ENCODE measurements at regions of chr1 and their contacts with region 1.

Region 1: DNA sequence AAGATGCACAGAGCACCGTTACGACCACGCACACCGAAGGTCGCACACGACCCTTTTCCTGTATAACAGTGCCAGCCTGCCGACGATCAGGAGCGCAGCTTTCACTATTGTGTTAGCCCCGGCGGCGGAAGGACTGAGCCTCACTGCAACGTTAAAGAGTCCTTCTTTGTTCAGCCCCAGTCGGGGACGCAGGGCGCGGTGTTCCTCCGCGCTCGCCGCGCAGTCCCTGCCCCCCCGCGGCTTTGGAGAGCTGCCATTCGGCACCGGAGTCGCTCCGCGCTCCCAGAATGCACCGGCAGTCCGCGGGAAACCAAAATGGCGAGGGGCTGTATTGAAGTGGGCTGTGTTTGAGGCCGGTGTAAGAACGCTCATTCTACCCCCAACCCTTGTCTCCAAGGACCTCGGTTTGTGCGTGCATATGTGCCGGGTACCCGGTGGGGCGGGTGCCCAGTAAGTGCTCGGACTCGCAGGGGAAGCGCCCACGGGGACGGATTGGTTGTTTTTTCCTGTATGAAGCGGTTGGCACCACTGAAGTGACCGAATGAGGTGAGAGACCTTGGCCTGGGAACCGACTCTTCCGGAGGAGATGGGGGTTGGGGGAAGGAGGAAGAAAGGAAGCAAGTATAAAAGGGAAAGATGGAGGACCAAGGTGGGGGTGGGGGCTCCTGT is at the start of gene MTF2:
- DNase-seq: peak; percentile 96
- H3K4me3 Mint-ChIP-seq: peak within 1 kb of the TSS; percentile 94
- H3K27ac Mint-ChIP-seq: peak within 1 kb of the TSS; percentile 94
- H3K4me1 Mint-ChIP-seq: peaks cover 29% of the 10 kb centered on the region
- H3K27me3 Mint-ChIP-seq: no peaks in the 10 kb centered on the region
- total RNA-seq, gene MTF2: 51.0 to 56.6 TPM

Region 2: DNA sequence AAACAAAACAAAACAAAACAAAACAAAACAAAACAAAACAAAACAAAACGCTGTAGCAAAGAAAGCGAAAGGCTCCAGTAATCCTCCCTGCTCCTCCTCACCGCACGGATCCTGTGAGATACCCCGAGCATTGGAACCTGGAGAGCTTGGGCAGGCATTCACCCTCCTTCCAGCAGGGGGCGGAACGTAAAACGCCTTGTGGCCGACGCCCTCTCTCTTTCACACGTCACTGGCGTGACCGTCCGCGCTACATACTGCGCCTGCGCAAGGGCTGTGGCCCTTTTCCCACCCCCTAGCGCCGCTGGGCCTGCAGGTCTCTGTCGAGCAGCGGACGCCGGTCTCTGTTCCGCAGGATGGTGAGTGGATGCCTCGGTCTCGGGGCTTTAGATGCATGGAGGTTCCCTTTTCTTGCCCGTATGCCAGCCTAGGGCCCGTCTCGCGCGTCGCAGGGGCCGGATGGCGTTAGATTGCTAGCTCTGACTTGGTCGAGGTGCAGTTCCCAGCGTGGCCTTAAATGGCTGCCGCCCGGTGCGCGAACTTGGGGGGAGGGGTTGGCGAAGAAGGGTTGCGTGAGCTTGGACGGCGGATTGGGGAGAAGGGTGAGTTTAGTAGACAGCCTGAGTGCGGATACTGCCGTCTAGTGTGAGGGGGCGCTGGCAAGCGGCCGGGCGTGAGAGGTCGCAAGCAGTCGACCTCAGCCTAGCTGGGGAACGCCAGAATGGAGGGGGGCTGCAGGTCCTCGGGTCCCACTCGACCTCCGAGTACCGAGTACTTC is 247.2 kb before region 1 on chr1 and contains the start of gene RPL5:
- CTCF ChIA-PET with region 1: interaction called, 5 read pairs
- intact Hi-C with region 1: loop called (anchors 1 kb)
- DNase-seq: peak; percentile 98
- H3K4me3 Mint-ChIP-seq: peak within 1 kb of the TSS; percentile 98
- H3K27ac Mint-ChIP-seq: peak within 1 kb of the TSS; percentile 99
- H3K4me1 Mint-ChIP-seq: peaks cover 38% of the 10 kb centered on the region
- H3K27me3 Mint-ChIP-seq: no peaks in the 10 kb centered on the region
- total RNA-seq, gene RPL5: 1,793 to 1,819 TPM

Region 3: GRCh38 chr1:93021539-93022134 is 57.5 kb before region 1 on chr1:
- CTCF ChIA-PET with region 1: interaction called, 6 read pairs
- intact Hi-C with region 1: loop called (anchors 5 kb)
- DNase-seq: no peak
- H3K4me3 Mint-ChIP-seq: no peak overlapping the region
- H3K27ac Mint-ChIP-seq: no peak overlapping the region
- H3K4me1 Mint-ChIP-seq: no peaks in the 10 kb centered on the region
- H3K27me3 Mint-ChIP-seq: peaks cover 1% of the 10 kb centered on the region

Region 4: DNA sequence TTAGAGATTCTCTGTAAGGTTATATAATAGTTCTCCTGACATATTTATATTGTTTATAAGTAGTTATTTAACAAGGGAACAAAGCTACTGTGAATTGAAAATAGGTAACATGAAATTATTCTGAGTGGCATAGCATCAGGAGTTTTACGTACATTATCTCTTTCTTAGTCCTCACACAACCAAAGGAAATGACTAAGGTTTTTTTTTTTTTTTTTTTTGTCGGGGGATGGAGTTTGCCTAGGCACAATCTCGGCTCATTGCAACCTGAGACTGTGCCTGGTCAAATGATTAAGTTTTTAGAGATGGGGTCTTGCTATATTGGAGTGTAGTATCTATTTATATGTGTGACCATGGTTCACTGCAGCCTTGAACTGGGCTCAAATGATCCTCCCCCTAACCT is 76.2 kb after region 1 on chr1:
- CTCF ChIA-PET with region 1: interaction called, 3 read pairs
- intact Hi-C with region 1: loop called (anchors 1 kb)
- DNase-seq: no peak
- H3K4me3 Mint-ChIP-seq: no peak overlapping the region
- H3K27ac Mint-ChIP-seq: peak overlapping the region; percentile 73
- H3K4me1 Mint-ChIP-seq: peaks cover 23% of the 10 kb centered on the region
- H3K27me3 Mint-ChIP-seq: no peaks in the 10 kb centered on the region

Region 5: DNA sequence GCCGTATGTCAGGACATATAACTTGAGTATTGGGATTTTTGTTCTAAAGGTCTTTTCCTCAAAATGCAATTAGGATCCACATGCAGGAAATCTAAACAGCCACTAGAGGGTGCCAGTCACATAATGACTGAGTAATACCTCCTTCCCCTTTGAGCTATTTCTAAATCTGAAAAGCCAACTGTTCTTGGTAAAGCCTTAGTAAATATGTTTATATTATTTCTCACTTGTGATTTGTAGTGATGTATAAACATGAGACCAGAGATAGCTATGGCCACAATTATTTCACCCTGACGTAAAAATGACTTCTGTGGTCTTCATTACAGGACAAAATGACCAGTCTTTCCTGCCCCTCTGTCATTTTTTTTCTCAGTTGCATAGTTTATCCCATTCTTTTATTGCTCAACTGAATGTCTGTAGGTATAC is 225.6 kb after region 1 on chr1:
- CTCF ChIA-PET with region 1: interaction called, 15 read pairs
- intact Hi-C with region 1: loop called (anchors 1 kb)
- DNase-seq: peak; percentile 67
- H3K4me3 Mint-ChIP-seq: no peak overlapping the region
- H3K27ac Mint-ChIP-seq: no peak overlapping the region
- H3K4me1 Mint-ChIP-seq: no peaks in the 10 kb centered on the region
- H3K27me3 Mint-ChIP-seq: no peaks in the 10 kb centered on the region

Region 6: GRCh38 chr1:93607814-93608186 is 528.7 kb after region 1 on chr1:
- CTCF ChIA-PET with region 1: no interaction called
- intact Hi-C with region 1: loop called (anchors 5 kb)
- DNase-seq: peak; percentile 78
- H3K4me3 Mint-ChIP-seq: no peak overlapping the region
- H3K27ac Mint-ChIP-seq: no peak overlapping the region
- H3K4me1 Mint-ChIP-seq: peaks cover 25% of the 10 kb centered on the region
- H3K27me3 Mint-ChIP-seq: peaks cover 21% of the 10 kb centered on the region

Region 7: DNA sequence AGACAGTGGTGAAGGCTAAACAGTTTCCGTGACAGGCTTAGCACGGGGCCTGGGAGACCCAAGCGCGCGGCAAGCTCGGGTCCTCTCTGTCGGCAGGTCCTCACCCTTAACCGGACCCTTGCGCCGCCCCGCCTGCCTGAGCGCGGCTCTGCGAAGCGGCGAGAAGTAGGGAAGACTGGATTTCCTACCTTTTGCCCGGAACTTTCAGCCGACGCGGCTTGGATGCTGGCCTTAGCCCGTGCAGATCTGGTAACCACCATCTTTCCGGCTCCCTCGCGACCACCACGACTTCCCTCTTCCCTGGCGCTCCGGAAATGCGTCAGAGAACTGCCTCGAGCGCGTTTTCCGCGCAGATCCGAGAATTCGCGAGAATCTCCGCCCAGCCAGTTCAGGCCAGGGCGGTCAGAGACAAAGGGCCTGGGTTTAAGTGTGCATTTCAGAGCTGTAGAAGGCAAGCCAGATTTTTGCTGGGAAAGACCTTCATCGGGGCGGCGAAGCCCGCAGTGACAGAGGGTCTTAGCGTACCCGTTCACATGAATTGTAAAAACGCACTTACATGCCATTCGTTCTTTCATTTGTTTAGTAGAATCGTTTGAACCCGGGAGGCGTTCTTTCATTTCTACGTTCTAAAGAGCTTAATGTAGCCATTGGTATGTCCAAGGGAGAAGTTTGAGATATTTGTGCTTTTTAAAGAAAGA is 799.9 kb after region 1 on chr1 and contains the start of gene DNTTIP2:
- CTCF ChIA-PET with region 1: no interaction called
- intact Hi-C with region 1: loop called (anchors 1 kb)
- DNase-seq: peak; percentile 95
- H3K4me3 Mint-ChIP-seq: peak within 1 kb of the TSS; percentile 92
- H3K27ac Mint-ChIP-seq: peak within 1 kb of the TSS; percentile 97
- H3K4me1 Mint-ChIP-seq: peaks cover 42% of the 10 kb centered on the region
- H3K27me3 Mint-ChIP-seq: no peaks in the 10 kb centered on the region
- total RNA-seq, gene DNTTIP2: 58.5 to 64.5 TPM

Measured in activated naive CD4-positive, alpha-beta T cell treated with anti-CD3 and anti-CD28 coated beads for 36 hours (primary cell).